Activated CD8-positive, alpha-beta T cell treated with anti-CD3 and anti-CD28 coated beads, Interleukin-2, amount 10 ng/mL, durations not matched to agents 7 days and 5 days (primary cell): ENCODE measurements at regions of chr2 and their contacts with region 1.

Region 1: GRCh38 chr2:119476301-119477021 is 44.8 kb downstream of the TMEM37 start:
- DNase-seq: peak; percentile 46
- ATAC-seq: peak; percentile 83
- H3K4me3 Mint-ChIP-seq: no peak overlapping the region
- H3K27ac Mint-ChIP-seq: no peak overlapping the region
- H3K4me1 Mint-ChIP-seq: no peaks in the 10 kb centered on the region
- H3K27me3 Mint-ChIP-seq: no peaks in the 10 kb centered on the region

Region 2: GRCh38 chr2:119463051-119463510 is 13.4 kb before region 1 on chr2:
- CTCF ChIA-PET with region 1: interaction called, 12 read pairs
- POLR2A ChIA-PET with region 1: no interaction called
- DNase-seq: no peak
- ATAC-seq: no peak
- H3K4me3 Mint-ChIP-seq: no peak overlapping the region
- H3K27ac Mint-ChIP-seq: no peak overlapping the region
- H3K4me1 Mint-ChIP-seq: no peaks in the 10 kb centered on the region
- H3K27me3 Mint-ChIP-seq: no peaks in the 10 kb centered on the region

Region 3: GRCh38 chr2:119487434-119488244 is 11.2 kb after region 1 on chr2:
- CTCF ChIA-PET with region 1: interaction called, 25 read pairs
- POLR2A ChIA-PET with region 1: no interaction called
- DNase-seq: no peak
- ATAC-seq: no peak
- H3K4me3 Mint-ChIP-seq: no peak overlapping the region
- H3K27ac Mint-ChIP-seq: no peak overlapping the region
- H3K4me1 Mint-ChIP-seq: no peaks in the 10 kb centered on the region
- H3K27me3 Mint-ChIP-seq: peaks cover 2% of the 10 kb centered on the region